Activated CD8-positive, alpha-beta T cell treated with anti-CD3 and anti-CD28 coated beads for 36 hours (primary cell): ENCODE measurements at regions of chr11 and their contacts with region 1.

Region 1: DNA sequence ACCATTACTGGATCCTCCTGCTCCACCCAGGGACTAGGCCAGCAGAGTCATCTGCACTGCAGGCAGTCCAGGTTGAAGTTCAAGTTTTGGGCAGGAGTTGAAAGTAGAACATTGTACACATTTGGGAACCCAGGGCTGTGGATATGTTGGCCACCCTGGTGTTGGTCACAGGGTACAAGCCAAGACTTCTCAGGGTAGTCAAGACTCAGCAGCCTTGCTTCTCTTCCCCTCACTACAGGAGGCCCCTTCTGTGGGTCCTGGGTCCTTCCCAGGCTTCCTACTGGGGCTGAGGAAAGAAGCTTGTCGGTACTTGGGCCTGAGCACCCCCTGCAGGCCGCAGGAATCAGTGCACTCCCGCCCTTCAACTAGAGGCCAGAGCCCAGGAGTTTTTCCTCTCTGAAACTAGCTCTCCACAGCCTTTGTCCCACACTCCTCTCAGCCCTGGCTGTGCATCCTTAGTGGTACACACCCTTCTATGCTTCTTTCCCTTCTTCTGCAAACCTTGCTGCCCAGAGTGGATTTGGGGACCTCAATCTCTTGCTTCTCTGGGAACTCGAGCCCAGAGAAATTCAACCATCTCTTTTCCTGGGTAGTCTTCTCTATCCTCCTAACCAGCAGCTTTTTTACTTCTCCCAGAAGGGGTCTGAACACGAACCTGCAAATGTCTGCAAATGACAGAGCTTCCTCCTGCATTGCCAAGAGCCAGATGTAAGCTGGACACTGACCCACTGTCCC is 2.6 kb upstream of the HPX start:
- DNase-seq: peak; percentile 67
- ATAC-seq: peak; percentile 90
- H3K4me3 Mint-ChIP-seq: no peak overlapping the region
- H3K27ac Mint-ChIP-seq: no peak overlapping the region
- H3K4me1 Mint-ChIP-seq: no peaks in the 10 kb centered on the region
- H3K27me3 Mint-ChIP-seq: no peaks in the 10 kb centered on the region
- CTCF ChIP-seq: peak; percentile 96

Region 2: DNA sequence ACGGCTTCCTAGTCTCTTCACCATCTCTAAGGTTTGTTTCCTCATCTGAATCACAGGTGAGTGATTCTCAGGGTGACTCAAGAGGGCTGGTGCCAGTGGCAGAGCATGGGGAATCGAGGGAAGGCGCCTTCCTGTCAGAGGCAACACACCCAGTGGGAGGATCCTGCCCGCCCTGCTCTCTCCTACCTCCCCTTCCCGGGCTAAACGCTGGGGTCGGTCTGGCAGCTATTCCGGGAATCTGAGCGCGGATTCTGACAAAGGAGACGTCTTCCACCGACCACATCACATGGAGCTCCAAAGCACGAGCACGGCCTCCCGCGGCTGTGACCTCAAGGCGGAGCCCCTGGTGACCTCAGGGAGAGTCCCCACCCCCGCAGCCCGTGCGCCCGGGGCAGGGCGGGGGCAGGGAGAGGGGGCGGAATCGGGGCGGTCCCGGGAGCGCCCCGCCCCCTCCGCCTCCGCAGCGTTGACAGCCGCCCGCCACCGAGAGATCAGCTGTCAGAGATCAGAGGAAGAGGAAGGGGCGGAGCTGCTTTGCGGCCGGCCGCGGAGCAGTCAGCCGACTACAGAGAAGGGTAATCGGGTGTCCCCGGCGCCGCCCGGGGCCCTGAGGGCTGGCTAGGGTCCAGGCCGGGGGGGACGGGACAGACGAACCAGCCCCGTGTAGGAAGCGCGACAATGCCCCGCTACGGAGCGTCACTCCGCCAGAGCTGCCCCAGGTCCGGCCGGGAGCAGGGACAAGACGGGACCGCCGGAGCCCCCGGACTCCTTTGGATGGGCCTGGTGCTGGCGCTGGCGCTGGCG is 53.3 kb before region 1 on chr11 and contains the start of gene SMPD1:
- CTCF ChIA-PET with region 1: interaction called, 14 read pairs
- POLR2A ChIA-PET with region 1: interaction called, 5 read pairs
- intact Hi-C with region 1: no loop called
- DNase-seq: peak; percentile 95
- ATAC-seq: peak; percentile 83
- H3K4me3 Mint-ChIP-seq: peak within 1 kb of the TSS; percentile 79
- H3K27ac Mint-ChIP-seq: peak within 1 kb of the TSS; percentile 94
- H3K4me1 Mint-ChIP-seq: peaks cover 44% of the 10 kb centered on the region
- H3K27me3 Mint-ChIP-seq: no peaks in the 10 kb centered on the region
- CTCF ChIP-seq: no peak
- total RNA-seq, gene SMPD1: 10.6 to 11.2 TPM

Region 3: DNA sequence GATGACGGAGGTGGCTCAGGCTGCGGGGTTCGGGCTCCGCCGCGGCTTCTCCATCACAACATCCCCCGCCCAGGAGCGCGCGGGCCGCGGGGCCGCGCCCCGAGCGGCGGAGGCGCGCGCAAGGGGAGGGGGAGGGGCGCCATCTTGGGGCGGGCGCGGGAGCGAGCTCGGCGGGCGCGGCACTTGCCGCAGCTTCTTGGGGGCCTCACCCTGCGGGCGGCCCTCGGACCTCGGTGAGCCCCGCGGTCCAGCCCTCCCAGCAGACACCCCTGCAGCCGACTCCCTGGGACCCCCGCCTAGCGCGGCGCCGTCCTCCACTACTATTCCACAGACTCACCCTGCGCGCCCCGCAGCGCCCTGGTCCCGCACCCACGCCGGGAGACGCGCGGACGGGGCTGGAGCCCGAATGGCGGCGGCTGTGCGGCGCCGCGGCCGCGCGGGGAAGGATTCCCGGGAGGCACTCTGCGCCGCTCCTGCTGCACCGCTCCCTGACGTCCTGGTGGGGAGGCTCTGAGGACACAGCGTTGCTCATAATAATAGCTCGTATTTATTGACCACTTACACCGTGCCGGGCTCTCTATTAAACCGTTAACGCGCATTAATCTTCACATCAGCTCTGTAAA is 24.3 kb before region 1 on chr11 and contains the start of gene APBB1:
- CTCF ChIA-PET with region 1: interaction called, 18 read pairs
- POLR2A ChIA-PET with region 1: interaction called, 3 read pairs
- intact Hi-C with region 1: no loop called
- DNase-seq: peak; percentile 69
- ATAC-seq: peak; percentile 72
- H3K4me3 Mint-ChIP-seq: no peak within 1 kb of the TSS
- H3K27ac Mint-ChIP-seq: peak within 1 kb of the TSS; percentile 75
- H3K4me1 Mint-ChIP-seq: peaks cover 4% of the 10 kb centered on the region
- H3K27me3 Mint-ChIP-seq: peaks cover 8% of the 10 kb centered on the region
- CTCF ChIP-seq: no peak
- total RNA-seq, gene APBB1: 28.1 to 31.1 TPM

Region 4: GRCh38 chr11:6473481-6474422 is 30.3 kb after region 1 on chr11 and contains the start of gene TRIM3:
- CTCF ChIA-PET with region 1: interaction called, 36 read pairs
- POLR2A ChIA-PET with region 1: interaction called, 3 read pairs
- intact Hi-C with region 1: no loop called
- DNase-seq: peak; percentile 64
- ATAC-seq: peak; percentile 66
- H3K4me3 Mint-ChIP-seq: peak within 1 kb of the TSS; percentile 76
- H3K27ac Mint-ChIP-seq: peak within 1 kb of the TSS; percentile 18
- H3K4me1 Mint-ChIP-seq: peaks cover 10% of the 10 kb centered on the region
- H3K27me3 Mint-ChIP-seq: no peaks in the 10 kb centered on the region
- CTCF ChIP-seq: no peak
- total RNA-seq, gene TRIM3: 4.4 to 5.5 TPM

Region 5: GRCh38 chr11:6486938-6487337 is 43.5 kb after region 1 on chr11:
- CTCF ChIA-PET with region 1: interaction called, 11 read pairs
- POLR2A ChIA-PET with region 1: interaction called, 5 read pairs
- intact Hi-C with region 1: no loop called
- DNase-seq: no peak
- ATAC-seq: no peak
- H3K4me3 Mint-ChIP-seq: no peak overlapping the region
- H3K27ac Mint-ChIP-seq: no peak overlapping the region
- H3K4me1 Mint-ChIP-seq: peaks cover 19% of the 10 kb centered on the region
- H3K27me3 Mint-ChIP-seq: no peaks in the 10 kb centered on the region
- CTCF ChIP-seq: no peak

Region 6: GRCh38 chr11:6497069-6497839 is 53.8 kb after region 1 on chr11 and contains the start of gene DNHD1:
- CTCF ChIA-PET with region 1: no interaction called
- POLR2A ChIA-PET with region 1: no interaction called
- intact Hi-C with region 1: no loop called
- DNase-seq: no peak
- ATAC-seq: no peak
- H3K4me3 Mint-ChIP-seq: no peak within 1 kb of the TSS
- H3K27ac Mint-ChIP-seq: no peak within 1 kb of the TSS
- H3K4me1 Mint-ChIP-seq: peaks cover 4% of the 10 kb centered on the region
- H3K27me3 Mint-ChIP-seq: no peaks in the 10 kb centered on the region
- CTCF ChIP-seq: no peak
- total RNA-seq, gene DNHD1: 27.5 to 28.2 TPM